ENCODE measurements at regions of chr1 and their contacts with region 1.

Region 1: GRCh38 chr1:47437447-47438164 is at the start of gene FOXD2:
- DNase-seq: peak; percentile 97
- H3K4me3 Mint-ChIP-seq: peak within 1 kb of the TSS; percentile 97
- H3K27ac Mint-ChIP-seq: peak within 1 kb of the TSS; percentile 85
- H3K4me1 Mint-ChIP-seq: peaks cover 27% of the 10 kb centered on the region
- H3K27me3 Mint-ChIP-seq: peaks cover 32% of the 10 kb centered on the region
- total RNA-seq, gene FOXD2: 0.07 and 0.09 TPM in 2 replicates

Region 2: DNA sequence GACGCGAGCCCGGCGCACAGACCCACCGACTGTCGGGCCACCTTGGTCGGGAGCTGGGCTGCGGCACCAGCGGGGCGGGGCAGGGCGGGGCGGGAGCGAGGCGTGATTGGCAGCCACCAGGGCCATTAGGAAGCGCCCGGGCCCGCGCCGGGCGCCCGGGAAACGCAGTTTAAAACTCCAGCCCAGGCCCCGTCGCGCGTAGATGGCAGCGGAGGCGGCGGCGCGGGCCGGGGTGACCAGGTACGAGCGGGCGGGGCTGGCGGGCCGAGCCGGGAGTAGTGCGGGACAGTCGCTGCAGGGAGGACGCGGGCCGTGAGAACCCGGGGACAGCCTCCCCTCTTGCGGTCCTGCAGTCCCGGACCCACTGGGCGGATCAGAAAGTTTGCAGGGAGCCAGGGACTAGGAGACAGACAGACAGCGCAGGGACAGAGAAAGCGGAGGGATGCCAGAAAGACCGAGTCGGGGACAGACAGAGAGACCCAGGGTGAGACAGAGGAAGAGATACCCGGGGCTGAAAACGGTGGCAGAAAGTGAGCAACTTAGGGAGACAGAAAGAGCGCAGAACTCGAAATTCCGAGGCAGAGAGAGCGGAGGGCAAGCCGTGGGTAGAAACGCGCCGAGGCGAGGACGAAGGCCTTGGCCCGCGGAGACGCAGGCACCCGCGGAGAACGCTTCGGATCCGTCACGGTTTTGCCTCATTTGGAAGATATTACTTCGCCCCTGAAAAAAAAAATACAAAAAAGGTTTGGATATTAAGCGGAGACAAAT is 947.8 kb before region 1 on chr1 and contains the start of gene DMBX1:
- intact Hi-C with region 1: loop called (anchors 10 kb)
- DNase-seq: peak; percentile 84
- H3K4me3 Mint-ChIP-seq: peak within 1 kb of the TSS; percentile 76
- H3K27ac Mint-ChIP-seq: peak within 1 kb of the TSS; percentile 60
- H3K4me1 Mint-ChIP-seq: peaks cover 22% of the 10 kb centered on the region
- H3K27me3 Mint-ChIP-seq: peaks cover 90% of the 10 kb centered on the region
- total RNA-seq, gene DMBX1: 0.07 TPM in 1 of 2 replicates, not detected in the other

Region 3: GRCh38 chr1:47323599-47324031 is 114.0 kb before region 1 on chr1:
- intact Hi-C with region 1: no loop called
- DNase-seq: no peak
- H3K4me3 Mint-ChIP-seq: no peak overlapping the region
- H3K27ac Mint-ChIP-seq: no peak overlapping the region
- H3K4me1 Mint-ChIP-seq: no peaks in the 10 kb centered on the region
- H3K27me3 Mint-ChIP-seq: no peaks in the 10 kb centered on the region

Region 4: DNA sequence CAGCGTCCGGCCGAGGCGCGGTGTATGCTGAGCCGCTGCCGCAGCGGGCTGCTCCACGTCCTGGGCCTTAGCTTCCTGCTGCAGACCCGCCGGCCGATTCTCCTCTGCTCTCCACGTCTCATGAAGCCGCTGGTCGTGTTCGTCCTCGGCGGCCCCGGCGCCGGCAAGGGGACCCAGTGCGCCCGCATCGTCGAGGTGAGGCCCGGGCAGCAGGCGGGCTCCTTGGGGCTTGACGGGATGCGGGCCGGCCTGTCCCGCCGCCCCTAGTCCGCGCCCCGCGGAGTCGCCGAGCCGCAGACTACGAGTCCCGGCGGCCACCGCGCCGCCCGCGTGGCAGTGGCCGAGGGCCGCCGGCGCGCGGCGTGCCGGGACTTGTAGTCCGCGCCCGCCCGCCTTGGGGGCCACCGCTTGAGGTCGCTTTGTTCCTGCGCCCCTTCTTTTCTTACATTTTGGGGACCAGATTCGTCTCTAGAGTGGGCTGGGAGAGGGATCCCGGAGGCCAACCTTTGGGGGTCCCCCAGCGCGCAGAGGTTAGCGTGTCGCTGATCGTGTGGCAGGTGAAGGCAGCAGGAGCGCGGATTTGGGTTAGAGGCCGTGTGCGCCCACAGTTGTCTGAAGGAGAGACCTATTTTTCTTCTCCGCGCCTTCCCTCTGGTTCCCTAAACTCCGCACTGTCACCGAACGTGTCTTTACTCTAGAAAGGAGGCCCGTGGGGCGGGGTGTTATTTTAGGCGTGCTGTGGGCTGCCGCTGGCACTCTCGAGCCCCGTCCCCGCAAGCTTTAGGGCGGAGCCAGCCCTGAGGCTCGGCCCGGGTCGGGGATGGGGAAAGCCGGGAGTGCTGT is 103.5 kb before region 1 on chr1:
- intact Hi-C with region 1: loop called (anchors 2 kb)
- DNase-seq: peak; percentile 94
- H3K4me3 Mint-ChIP-seq: no peak overlapping the region
- H3K27ac Mint-ChIP-seq: peak overlapping the region; percentile 96
- H3K4me1 Mint-ChIP-seq: peaks cover 10% of the 10 kb centered on the region
- H3K27me3 Mint-ChIP-seq: no peaks in the 10 kb centered on the region

Region 5: GRCh38 chr1:47409311-47410070 is 28.1 kb before region 1 on chr1:
- intact Hi-C with region 1: no loop called
- DNase-seq: no peak
- H3K4me3 Mint-ChIP-seq: no peak overlapping the region
- H3K27ac Mint-ChIP-seq: no peak overlapping the region
- H3K4me1 Mint-ChIP-seq: no peaks in the 10 kb centered on the region
- H3K27me3 Mint-ChIP-seq: peaks cover 34% of the 10 kb centered on the region

Region 6: DNA sequence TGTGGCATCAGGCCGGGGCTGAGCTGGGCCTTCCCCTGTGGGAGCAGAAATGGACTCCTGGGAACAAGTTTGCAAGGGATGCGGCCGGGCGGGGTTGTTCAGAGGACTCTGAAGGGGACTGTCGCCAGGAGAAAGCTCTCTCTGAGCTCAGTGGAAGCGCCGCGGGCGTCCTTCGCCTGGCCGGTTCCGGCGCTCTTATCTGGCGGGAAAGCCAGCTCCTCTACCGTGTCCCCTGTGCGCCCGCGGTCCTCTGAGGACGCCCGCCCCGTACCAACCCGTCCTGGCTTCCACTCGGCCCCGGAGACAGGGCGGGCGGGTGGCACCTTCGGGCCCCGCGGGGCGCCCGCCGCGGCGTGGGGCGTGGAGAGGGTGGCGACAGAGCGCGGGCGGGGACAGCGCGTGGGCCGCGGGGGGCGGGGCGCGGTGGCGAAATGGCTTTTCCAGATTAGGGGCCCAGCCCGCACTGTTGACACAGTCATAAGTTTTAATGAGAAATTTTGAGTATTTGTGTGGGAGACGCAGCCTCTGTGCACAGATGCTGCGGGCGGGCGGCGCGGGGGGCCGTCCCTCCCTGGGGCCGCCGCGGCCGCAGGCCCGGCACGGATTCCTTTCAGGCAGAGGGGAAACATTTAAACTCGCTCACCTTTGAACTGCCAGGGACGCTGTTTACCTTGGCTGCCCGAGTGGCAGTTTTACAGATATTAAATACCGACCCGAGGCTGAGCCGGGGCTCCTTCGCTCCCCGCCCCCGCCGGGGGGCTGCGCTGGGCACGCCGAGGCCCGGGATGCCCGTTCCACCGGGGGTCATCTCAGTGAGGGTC is 70.5 kb after region 1 on chr1:
- intact Hi-C with region 1: loop called (anchors 5 kb)
- DNase-seq: peak; percentile 57
- H3K4me3 Mint-ChIP-seq: no peak overlapping the region
- H3K27ac Mint-ChIP-seq: no peak overlapping the region
- H3K4me1 Mint-ChIP-seq: peaks cover 2% of the 10 kb centered on the region
- H3K27me3 Mint-ChIP-seq: peaks cover 70% of the 10 kb centered on the region

Region 7: GRCh38 chr1:47710329-47711071 is 272.9 kb after region 1 on chr1:
- intact Hi-C with region 1: loop called (anchors 2 kb)
- DNase-seq: peak; percentile 92
- H3K4me3 Mint-ChIP-seq: no peak overlapping the region
- H3K27ac Mint-ChIP-seq: no peak overlapping the region
- H3K4me1 Mint-ChIP-seq: peaks cover 2% of the 10 kb centered on the region
- H3K27me3 Mint-ChIP-seq: peaks cover 67% of the 10 kb centered on the region

Region 8: DNA sequence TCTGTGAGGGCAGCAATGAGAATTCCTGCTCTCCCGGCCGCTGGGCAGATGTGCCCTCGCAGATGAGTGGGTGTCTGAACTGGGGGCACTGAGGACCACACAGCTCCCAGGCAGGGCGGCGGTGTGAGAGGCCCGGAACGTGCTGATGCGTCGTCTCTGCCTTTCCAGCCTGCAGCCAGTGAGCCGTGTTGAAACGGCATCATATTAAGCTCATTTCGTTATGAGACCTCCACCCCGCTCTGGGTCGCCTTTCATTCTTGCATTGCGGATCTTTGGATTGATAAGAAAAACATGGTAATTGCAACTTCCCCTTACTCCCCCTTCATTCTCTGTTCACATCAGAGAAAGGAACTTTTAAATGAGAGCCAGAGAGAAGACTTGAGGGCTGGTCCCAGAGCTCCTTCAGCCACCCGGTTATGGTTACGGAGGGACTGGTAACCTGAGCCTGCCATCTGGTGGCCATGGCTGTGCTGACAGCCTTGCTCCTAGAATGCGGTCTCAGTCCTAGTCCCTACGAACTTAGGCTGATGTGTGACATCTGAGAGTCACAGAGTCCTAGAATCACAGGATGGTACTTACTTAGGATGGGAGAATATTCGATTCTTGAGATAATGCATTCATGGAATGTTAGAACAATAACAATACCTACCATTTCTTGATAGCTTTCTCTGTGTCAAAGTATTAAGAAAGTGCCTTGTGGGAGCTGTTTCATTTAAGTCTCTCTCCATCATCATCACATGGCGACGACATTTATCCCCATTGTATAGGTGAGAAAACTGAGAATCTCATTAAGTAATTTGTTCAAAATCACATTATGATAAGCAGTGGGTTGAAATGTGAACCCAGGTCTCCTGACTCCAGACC is 288.6 kb after region 1 on chr1:
- intact Hi-C with region 1: loop called (anchors 5 kb)
- DNase-seq: peak; percentile 88
- H3K4me3 Mint-ChIP-seq: no peak overlapping the region
- H3K27ac Mint-ChIP-seq: no peak overlapping the region
- H3K4me1 Mint-ChIP-seq: peaks cover 3% of the 10 kb centered on the region
- H3K27me3 Mint-ChIP-seq: peaks cover 42% of the 10 kb centered on the region

Measured in activated CD4-positive, alpha-beta T cell treated with anti-CD3 and anti-CD28 coated beads, Interleukin-2, amount 10 ng/mL, durations not matched to agents 24 days and 14 days (primary cell).